HepG2 (cell line): ENCODE measurements at regions of chr3 and their contacts with region 1.

Region 1: DNA sequence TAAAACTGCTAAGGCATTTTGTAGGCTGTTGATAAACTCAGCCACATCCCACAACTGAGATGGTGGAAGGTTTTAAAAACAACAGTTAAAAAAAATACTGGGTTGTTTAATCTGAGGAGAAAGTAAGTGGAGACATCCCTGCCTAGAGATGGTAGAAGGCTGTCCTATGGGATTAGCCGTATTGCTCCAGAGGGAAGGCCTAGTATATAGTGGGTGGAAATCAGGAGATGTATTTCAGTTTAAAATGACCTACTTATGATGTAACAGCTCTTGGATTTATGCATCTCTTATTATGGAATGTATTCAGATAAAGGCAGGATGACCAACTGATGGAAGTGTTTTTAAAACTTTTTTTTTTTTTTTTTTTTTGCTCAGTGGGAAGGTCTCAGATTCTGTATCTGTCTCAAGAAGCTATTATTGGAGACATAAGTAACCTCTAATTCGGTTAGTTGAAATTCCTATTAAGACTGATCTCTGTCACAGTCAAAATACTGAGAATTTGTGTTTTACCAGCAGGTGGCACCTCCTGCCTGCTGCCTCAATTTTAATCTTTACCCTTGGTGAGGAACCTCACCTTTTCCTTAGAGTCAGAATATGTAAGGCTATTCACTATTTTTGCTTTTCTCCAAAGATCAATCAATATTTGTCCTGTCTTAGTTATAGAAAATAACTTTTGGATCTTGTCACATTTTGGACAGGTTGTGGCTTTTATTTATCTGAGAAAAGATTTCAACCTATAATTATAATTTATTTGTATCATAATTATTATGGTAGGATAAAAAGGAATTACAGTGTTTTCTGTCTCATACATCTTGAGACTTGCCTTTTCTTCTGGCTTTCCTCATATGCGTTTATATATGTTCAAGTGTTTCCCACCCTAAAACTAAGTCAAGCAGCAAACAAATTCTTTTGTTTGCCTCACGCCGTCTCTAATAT is 63.0 kb downstream of the VPS8 start:
- DNase-seq: peak; percentile 27
- ATAC-seq: peak; percentile 50; the same call in 1 of the 3 replicates
- H3K4me3 ChIP-seq: no peak overlapping the region
- H3K27ac ChIP-seq: no peak overlapping the region
- H3K4me1 ChIP-seq: no peaks in the 10 kb centered on the region
- H3K27me3 ChIP-seq: no peaks in the 10 kb centered on the region
- CTCF ChIP-seq: peak; percentile 71
- EP300 ChIP-seq: no peak
- POLR2A ChIP-seq: no peak
- RAD21 ChIP-seq: peak; percentile 60; the same call in 1 of the 2 replicates

Region 2: DNA sequence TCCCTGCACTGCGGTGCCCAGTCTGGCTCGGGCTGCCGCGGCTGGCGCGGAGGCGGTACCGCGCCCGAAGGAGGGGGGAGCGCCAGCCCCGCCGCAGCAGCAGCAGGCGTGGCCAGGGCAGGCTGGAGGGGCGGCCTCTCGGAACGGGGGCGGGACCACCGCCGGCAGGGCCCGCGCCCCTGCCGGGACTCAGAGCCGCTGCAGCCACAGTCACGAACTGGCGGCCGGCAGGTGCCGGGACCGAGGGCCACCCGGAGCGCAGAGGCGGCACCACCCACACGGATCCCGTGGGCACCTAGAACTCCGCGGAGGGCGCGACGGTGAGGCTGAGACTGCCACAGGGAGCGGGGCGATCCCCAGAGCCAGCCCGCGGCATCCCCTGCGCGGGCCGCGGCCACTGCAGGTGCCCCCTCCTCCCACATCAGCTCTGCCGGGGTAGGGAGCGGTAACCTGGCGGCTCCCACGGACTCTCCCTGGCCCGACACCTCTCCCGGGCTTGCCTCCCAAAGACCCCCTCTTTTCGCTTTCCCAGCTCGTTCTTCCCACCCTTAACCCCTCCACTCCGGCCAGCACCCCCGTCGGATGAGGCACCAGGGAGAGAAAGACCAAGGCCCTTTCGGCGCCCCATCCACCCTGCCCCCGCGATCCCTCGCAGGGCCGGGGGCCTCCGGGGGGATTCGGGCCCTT is 645.4 kb before region 1 on chr3 and contains the start of gene VWA5B2:
- CTCF ChIA-PET with region 1: no interaction called
- POLR2A ChIA-PET with region 1: no interaction called
- in situ Hi-C with region 1: no loop called
- intact Hi-C with region 1: no loop called
- DNase-seq: peak; percentile 44
- ATAC-seq: peak; percentile 90
- H3K4me3 ChIP-seq: peak within 1 kb of the TSS; percentile 56 to 80 (median 69)
- H3K27ac ChIP-seq: no peak within 1 kb of the TSS
- H3K4me1 ChIP-seq: peaks cover 11% of the 10 kb centered on the region; the same call in 1 of the 2 replicates
- H3K27me3 ChIP-seq: peaks cover 9 to 67% of the 10 kb centered on the region in 2 experiments; a peak in 4 of 5 replicates
- CTCF ChIP-seq: peak; percentile 15; the same call in 1 of the 2 replicates
- EP300 ChIP-seq: no peak
- POLR2A ChIP-seq: no peak
- RAD21 ChIP-seq: peak; percentile 9; the same call in 1 of the 2 replicates
- total RNA-seq, gene VWA5B2: 0.04 TPM in 1 of 2 replicates, not detected in the other

Region 3: GRCh38 chr3:185070491-185071286 is 195.7 kb after region 1 on chr3:
- CTCF ChIA-PET with region 1: interaction called, 3 read pairs
- POLR2A ChIA-PET with region 1: no interaction called
- in situ Hi-C with region 1: no loop called
- intact Hi-C with region 1: loop called (anchors 2 kb)
- DNase-seq: peak; percentile 73
- ATAC-seq: peak; percentile 97
- H3K4me3 ChIP-seq: peak overlapping the region; percentile 8 to 42 (median 11); a peak in 3 of 6 replicates
- H3K27ac ChIP-seq: no peak overlapping the region
- H3K4me1 ChIP-seq: peaks cover 26% of the 10 kb centered on the region
- H3K27me3 ChIP-seq: peaks cover 0 to 1% of the 10 kb centered on the region in 2 experiments; a peak in 2 of 5 replicates
- CTCF ChIP-seq: peak; percentile 79
- EP300 ChIP-seq: no peak
- POLR2A ChIP-seq: no peak
- RAD21 ChIP-seq: peak; percentile 64

Region 4: GRCh38 chr3:185176750-185177359 is 301.9 kb after region 1 on chr3:
- CTCF ChIA-PET with region 1: interaction called, 14 read pairs
- POLR2A ChIA-PET with region 1: no interaction called
- in situ Hi-C with region 1: loop called (anchors 5 kb)
- intact Hi-C with region 1: loop called (anchors 1 kb)
- DNase-seq: peak; percentile 36
- ATAC-seq: no peak
- H3K4me3 ChIP-seq: peak overlapping the region in 2 of 3 experiments; percentile 22 to 52; a peak in 3 of 6 replicates
- H3K27ac ChIP-seq: no peak overlapping the region
- H3K4me1 ChIP-seq: peaks cover 24% of the 10 kb centered on the region
- H3K27me3 ChIP-seq: peaks cover 0 to 2% of the 10 kb centered on the region in 2 experiments; a peak in 1 of 5 replicates
- CTCF ChIP-seq: peak; percentile 66
- EP300 ChIP-seq: no peak
- POLR2A ChIP-seq: no peak
- RAD21 ChIP-seq: peak; percentile 58

Region 5: DNA sequence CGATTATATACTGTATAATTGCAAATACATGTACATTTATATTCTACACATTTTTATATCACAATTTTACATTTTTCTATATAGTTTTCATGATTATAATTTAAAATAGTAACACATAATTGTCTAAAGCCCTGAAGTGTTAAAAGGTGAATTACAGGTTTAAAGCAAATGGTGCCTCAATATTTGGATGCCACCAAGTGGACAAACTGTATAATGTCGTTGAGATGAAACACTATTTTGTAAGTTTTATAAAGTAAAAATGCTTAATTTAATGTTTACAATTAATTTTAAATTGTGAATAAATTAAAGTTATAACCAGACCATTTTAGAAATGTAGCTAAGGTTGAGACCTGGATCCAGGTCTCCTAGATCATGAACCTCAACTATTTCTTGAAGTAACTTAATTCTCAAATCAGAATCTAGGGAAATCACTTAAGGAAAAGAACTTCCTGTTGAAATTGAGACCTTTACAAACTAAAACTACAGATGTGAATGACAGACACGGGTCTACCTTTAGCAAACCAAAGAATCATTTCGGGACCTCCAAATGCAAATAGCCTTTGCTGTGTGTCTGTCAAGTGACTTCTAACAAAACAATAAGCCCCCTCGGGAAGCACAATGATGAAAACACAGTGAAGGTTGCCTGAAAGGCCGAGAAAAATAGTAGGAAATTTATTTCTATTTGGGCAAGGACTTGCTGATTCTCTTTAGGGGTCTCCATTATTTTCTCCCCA is 341.1 kb after region 1 on chr3:
- CTCF ChIA-PET with region 1: interaction called, 12 read pairs
- POLR2A ChIA-PET with region 1: no interaction called
- in situ Hi-C with region 1: loop called (anchors 10 kb)
- intact Hi-C with region 1: loop called (anchors 1 kb)
- DNase-seq: peak; percentile 14
- ATAC-seq: no peak
- H3K4me3 ChIP-seq: no peak overlapping the region
- H3K27ac ChIP-seq: peak overlapping the region; percentile 43
- H3K4me1 ChIP-seq: peaks cover 14% of the 10 kb centered on the region
- H3K27me3 ChIP-seq: no peaks in the 10 kb centered on the region
- CTCF ChIP-seq: peak; percentile 42
- EP300 ChIP-seq: no peak
- POLR2A ChIP-seq: no peak
- RAD21 ChIP-seq: no peak

Region 6: DNA sequence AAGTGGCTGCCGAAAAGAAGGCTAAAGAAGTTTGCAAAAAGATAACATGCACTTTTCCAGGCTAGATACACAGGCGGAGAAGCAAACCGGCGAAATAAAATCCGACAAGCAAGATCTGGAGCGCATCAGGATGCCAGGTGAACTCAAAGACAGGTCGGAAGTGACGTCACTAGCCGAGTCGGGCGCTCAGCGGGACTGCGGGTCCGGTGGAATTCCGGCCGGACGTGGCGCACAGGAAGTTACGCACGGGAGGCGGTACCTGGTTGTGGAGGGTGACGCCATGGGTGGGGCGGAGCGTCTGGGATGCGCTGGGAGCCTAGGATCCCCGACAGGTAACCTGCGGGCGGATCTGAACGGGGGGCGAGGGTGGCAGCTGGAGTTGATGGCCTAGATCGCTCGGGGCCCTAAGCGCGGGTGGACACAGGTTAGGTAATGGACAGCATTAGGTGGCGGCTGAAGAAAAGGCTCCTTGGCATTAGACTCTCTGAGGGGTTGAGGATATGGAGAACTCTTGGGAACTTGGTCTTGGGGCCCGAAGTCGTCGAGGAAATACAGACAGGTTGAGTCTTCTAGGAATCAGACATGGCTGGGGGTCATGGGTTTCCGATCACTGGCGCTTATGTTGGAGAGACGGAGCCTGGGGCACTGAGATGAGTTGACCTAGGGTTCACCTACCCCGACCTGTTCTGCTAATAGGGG is 407.9 kb after region 1 on chr3:
- CTCF ChIA-PET with region 1: interaction called, 3 read pairs
- POLR2A ChIA-PET with region 1: no interaction called
- in situ Hi-C with region 1: loop called (anchors 5 kb)
- intact Hi-C with region 1: loop called (anchors 1 kb)
- DNase-seq: peak; percentile 94
- ATAC-seq: peak; percentile 100
- H3K4me3 ChIP-seq: peak overlapping the region; percentile 84 to 87 (median 86)
- H3K27ac ChIP-seq: peak overlapping the region; percentile 52
- H3K4me1 ChIP-seq: peaks cover 35% of the 10 kb centered on the region
- H3K27me3 ChIP-seq: no peaks in the 10 kb centered on the region; a peak in 2 of 5 replicates
- CTCF ChIP-seq: no peak; the same call in 1 of the 2 replicates
- EP300 ChIP-seq: no peak
- POLR2A ChIP-seq: peak; percentile 46 to 82; a peak in 3 of 4 replicates
- RAD21 ChIP-seq: no peak

Region 7: GRCh38 chr3:185308126-185308754 is 433.3 kb after region 1 on chr3:
- CTCF ChIA-PET with region 1: no interaction called
- POLR2A ChIA-PET with region 1: no interaction called
- in situ Hi-C with region 1: no loop called
- intact Hi-C with region 1: loop called (anchors 1 kb)
- DNase-seq: peak; percentile 71
- ATAC-seq: peak; percentile 78
- H3K4me3 ChIP-seq: no peak overlapping the region; a peak in 1 of 6 replicates
- H3K27ac ChIP-seq: peak overlapping the region; percentile 85
- H3K4me1 ChIP-seq: peaks cover 35% of the 10 kb centered on the region
- H3K27me3 ChIP-seq: no peaks in the 10 kb centered on the region
- CTCF ChIP-seq: peak; percentile 77
- EP300 ChIP-seq: no peak
- POLR2A ChIP-seq: no peak
- RAD21 ChIP-seq: peak; percentile 48; the same call in 1 of the 2 replicates